ENCODE measurements at regions of chr17 and their contacts with region 1.

Region 1: DNA sequence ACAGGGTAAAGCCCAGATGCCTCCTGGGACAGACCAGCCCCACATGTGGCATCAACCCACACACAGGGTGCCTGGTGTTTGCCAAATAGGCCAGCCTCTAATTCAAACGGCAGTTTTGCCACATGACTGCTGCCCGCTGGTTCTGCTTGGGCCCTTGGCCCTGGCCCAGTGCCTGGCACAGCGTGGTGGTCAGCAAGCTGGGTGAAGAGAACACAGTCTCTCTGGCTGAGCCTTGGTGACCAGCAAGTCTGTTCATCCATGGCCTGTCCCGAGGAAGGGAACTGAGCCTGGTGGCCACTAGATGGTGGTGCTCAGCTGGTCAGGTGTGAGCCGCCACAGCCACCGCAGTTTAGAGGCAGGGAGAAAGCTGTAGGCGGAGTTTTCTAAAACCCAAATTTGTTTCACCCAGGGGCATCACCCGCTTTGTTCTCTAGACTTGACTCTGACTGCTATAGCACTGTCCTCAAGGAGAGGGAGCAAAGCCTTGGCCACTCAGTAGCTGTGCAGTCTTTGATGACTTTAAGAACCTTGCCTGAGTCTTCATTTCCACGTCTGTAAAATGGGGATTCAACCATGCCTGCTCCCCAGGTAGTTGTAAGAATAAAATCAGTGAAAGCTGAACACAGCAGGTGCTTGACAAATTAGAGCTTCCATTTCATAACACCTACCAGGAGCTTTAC is 4.7 kb upstream of the GFAP start:
- DNase-seq: peak; percentile 72 to 82 (median 82)
- ATAC-seq: peak; percentile 92
- H3K4me3 ChIP-seq: no peak overlapping the region
- H3K4me1 ChIP-seq: no peaks in the 10 kb centered on the region
- CTCF ChIP-seq: peak; percentile 71

Region 2: GRCh38 chr17:45021607-45022287 is 101.7 kb after region 1 on chr17:
- intact Hi-C with region 1: loop called (anchors 5 to 10 kb)
- DNase-seq: peak; percentile 62 to 82 (median 73)
- ATAC-seq: peak; percentile 89
- H3K4me3 ChIP-seq: no peak overlapping the region
- H3K4me1 ChIP-seq: peaks cover 18% of the 10 kb centered on the region
- CTCF ChIP-seq: peak; percentile 98

Region 3: GRCh38 chr17:45098869-45099616 is 179.0 kb after region 1 on chr17:
- intact Hi-C with region 1: loop called in 1 of 2 experiments (anchors 10 kb)
- DNase-seq: peak; percentile 80 to 94 (median 91)
- ATAC-seq: peak; percentile 90
- H3K4me3 ChIP-seq: no peak overlapping the region
- H3K4me1 ChIP-seq: no peaks in the 10 kb centered on the region
- CTCF ChIP-seq: peak; percentile 90

Region 4: GRCh38 chr17:45110668-45111611 is 190.9 kb after region 1 on chr17:
- intact Hi-C with region 1: loop called in 1 of 2 experiments (anchors 10 kb)
- DNase-seq: no peak
- ATAC-seq: no peak
- H3K4me3 ChIP-seq: no peak overlapping the region
- H3K4me1 ChIP-seq: no peaks in the 10 kb centered on the region
- CTCF ChIP-seq: no peak